PC-3 (cell line): ENCODE measurements at regions of chr18 and their contacts with region 1.

Region 1: GRCh38 chr18:67977067-67977616 is 460.6 kb upstream of the DSEL start:
- DNase-seq: no peak
- ATAC-seq: no peak
- H3K4me3 ChIP-seq: no peak overlapping the region
- H3K27ac ChIP-seq: no peak overlapping the region
- H3K4me1 ChIP-seq: no peaks in the 10 kb centered on the region
- H3K27me3 ChIP-seq: no peaks in the 10 kb centered on the region
- CTCF ChIP-seq: no peak

Region 2: GRCh38 chr18:67893916-67894315 is 83.2 kb before region 1 on chr18:
- CTCF ChIA-PET with region 1: no interaction called
- POLR2A ChIA-PET with region 1: no interaction called
- intact Hi-C with region 1: loop called (anchors 10 kb)
- DNase-seq: no peak
- ATAC-seq: no peak
- H3K4me3 ChIP-seq: no peak overlapping the region
- H3K27ac ChIP-seq: no peak overlapping the region
- H3K4me1 ChIP-seq: no peaks in the 10 kb centered on the region
- H3K27me3 ChIP-seq: no peaks in the 10 kb centered on the region
- CTCF ChIP-seq: no peak

Region 3: GRCh38 chr18:68035774-68036522 is 58.8 kb after region 1 on chr18:
- CTCF ChIA-PET with region 1: no interaction called
- POLR2A ChIA-PET with region 1: no interaction called
- intact Hi-C with region 1: no loop called
- DNase-seq: no peak
- ATAC-seq: no peak
- H3K4me3 ChIP-seq: no peak overlapping the region
- H3K27ac ChIP-seq: no peak overlapping the region
- H3K4me1 ChIP-seq: no peaks in the 10 kb centered on the region
- H3K27me3 ChIP-seq: no peaks in the 10 kb centered on the region
- CTCF ChIP-seq: no peak

Region 4: GRCh38 chr18:68104036-68104435 is 126.9 kb after region 1 on chr18:
- CTCF ChIA-PET with region 1: no interaction called
- POLR2A ChIA-PET with region 1: no interaction called
- intact Hi-C with region 1: no loop called
- DNase-seq: peak; percentile 56
- ATAC-seq: no peak; the same call in 1 of the 2 replicates
- H3K4me3 ChIP-seq: no peak overlapping the region
- H3K27ac ChIP-seq: no peak overlapping the region; the same call in 1 of the 2 replicates
- H3K4me1 ChIP-seq: peaks cover 6% of the 10 kb centered on the region
- H3K27me3 ChIP-seq: no peaks in the 10 kb centered on the region
- CTCF ChIP-seq: no peak